ENCODE measurements at regions of chr2 and their contacts with region 1.

Region 1: GRCh38 chr2:46915811-46916630 is 415 bp upstream of the MCFD2 start:
- DNase-seq: peak; percentile 95
- ATAC-seq: peak; percentile 92

Region 2: GRCh38 chr2:46749042-46749531 is 166.9 kb before region 1 on chr2:
- intact Hi-C with region 1: no loop called
- DNase-seq: no peak
- ATAC-seq: peak; percentile 51

Region 3: GRCh38 chr2:47323009-47323821 is 407.2 kb after region 1 on chr2:
- intact Hi-C with region 1: loop called (anchors 5 kb)
- DNase-seq: peak; percentile 73
- ATAC-seq: peak; percentile 94

Measured in left ventricle myocardium superior (tissue), 1 donor.